ENCODE measurements at regions of chr5 and their contacts with region 1.

Region 1: GRCh38 chr5:14727428-14727865 is 62.9 kb downstream of the OTULIN start:
- DNase-seq: no peak
- H3K4me3 ChIP-seq: no peak overlapping the region
- H3K27me3 ChIP-seq: no peaks in the 10 kb centered on the region
- CTCF ChIP-seq: peak; percentile 91

Region 2: DNA sequence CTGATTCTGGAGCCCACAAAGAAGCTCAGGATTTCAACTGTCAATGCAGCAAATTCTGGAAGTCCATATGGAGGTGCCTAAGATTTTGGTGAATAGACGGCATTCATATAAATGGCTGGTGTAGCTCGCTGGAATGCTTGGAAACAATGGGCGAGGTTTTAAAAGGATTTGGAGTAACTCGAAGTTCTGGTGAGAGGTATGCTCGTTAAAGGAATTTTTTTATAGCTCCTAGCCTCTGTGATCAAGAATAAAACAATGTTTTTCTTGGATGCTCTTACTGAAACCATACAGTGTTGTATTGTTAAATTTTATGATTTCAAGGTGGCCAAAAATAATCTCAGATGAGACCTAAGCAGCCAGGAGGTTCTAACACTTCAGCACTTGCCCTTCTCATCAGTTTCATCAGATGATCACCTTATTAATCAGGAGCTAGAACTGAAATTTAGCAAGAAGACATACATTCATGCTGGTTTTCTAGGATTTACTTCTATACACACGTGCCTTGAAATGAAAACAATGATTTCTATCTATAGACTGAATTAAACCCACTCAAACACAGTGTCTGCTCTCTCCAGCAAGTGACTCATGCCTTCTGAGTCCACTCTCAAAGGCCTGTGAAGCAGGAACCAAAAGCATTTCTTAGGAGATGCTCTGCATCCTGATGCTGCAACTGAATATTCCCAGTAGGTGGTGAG is 16.3 kb after region 1 on chr5:
- CTCF ChIA-PET with region 1: interaction called, 13 read pairs
- POLR2A ChIA-PET with region 1: no interaction called
- DNase-seq: peak; percentile 42
- H3K4me3 ChIP-seq: no peak overlapping the region
- H3K27me3 ChIP-seq: no peaks in the 10 kb centered on the region
- CTCF ChIP-seq: no peak

Region 3: GRCh38 chr5:14871210-14872069 is 144.0 kb after region 1 on chr5 and contains the start of gene ANKH:
- CTCF ChIA-PET with region 1: interaction called, 19 read pairs
- POLR2A ChIA-PET with region 1: no interaction called
- DNase-seq: no peak
- H3K4me3 ChIP-seq: peak within 1 kb of the TSS; percentile 84
- H3K27me3 ChIP-seq: no peaks in the 10 kb centered on the region
- CTCF ChIP-seq: no peak
- polyA plus RNA-seq, gene ANKH: 37.7 and 65.3 TPM in 2 replicates

Region 4: DNA sequence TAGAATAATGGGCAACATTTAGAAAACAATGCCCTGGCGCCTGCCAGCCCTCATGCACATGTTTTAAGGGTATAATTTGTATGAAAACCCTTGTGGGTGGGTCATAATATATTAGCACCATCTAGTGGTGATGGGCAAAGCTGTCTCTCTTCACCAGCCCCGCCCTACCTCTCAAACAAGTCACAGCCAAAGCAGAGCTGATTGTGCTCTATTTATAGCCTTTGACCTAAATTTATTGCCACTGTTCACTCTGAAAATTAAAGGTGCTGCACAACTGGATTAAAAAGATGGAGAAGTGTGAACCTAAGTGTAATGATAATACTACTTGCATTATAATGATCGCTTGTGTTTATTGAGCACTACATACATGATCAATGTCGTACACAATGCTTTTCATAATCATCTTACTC is 276.1 kb after region 1 on chr5:
- CTCF ChIA-PET with region 1: interaction called, 92 read pairs
- POLR2A ChIA-PET with region 1: no interaction called
- DNase-seq: peak; percentile 21
- H3K4me3 ChIP-seq: no peak overlapping the region
- H3K27me3 ChIP-seq: peaks cover 7% of the 10 kb centered on the region
- CTCF ChIP-seq: peak; percentile 77

Region 5: DNA sequence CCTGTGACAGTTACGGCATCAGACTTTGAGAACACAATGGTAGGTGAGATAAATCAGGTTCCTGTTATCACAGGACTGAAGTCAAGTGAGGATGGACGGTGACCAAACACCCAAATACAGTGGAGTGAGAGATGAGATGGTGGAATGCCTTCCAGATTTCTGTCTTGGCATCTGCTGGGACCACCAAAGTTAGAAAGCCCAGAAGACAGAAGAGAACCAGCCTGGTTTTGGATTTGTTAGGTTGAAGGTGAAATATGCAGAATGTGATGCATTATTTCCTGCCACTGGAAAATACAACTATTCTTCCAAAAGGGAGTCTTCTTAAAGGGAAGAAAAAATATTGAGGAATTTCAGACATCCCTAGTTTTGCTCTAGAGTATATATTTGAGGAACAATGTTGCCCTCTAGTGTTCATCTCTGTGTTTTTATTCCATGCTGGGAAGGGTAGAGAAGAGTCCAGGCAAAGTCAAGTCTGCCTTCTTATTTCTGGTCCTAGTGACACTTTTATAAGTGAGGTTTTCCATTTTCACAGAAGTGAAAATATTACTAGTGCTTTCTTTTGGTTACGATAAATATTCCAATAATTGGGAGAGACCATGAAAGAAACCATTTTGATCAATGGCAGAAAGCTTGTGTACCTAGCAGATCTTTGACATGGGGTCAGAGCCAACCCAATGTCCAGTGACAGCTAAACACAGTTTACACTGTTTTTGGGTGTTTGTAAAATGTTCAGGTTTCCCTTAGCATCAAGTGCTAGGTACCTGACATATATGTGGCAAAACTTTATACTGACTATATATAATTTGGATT is 286.4 kb after region 1 on chr5:
- CTCF ChIA-PET with region 1: interaction called, 42 read pairs
- POLR2A ChIA-PET with region 1: no interaction called
- DNase-seq: peak; percentile 24
- H3K4me3 ChIP-seq: no peak overlapping the region
- H3K27me3 ChIP-seq: no peaks in the 10 kb centered on the region
- CTCF ChIP-seq: peak; percentile 58

Measured in BJ (cell line).